Activated naive CD8-positive, alpha-beta T cell treated with anti-CD3 and anti-CD28 coated beads, Interleukin-2, amount 10 ng/mL, durations not matched to agents 7 days and 5 days (primary cell): ENCODE measurements at regions of chr9 and their contacts with region 1.

Region 1: GRCh38 chr9:137578518-137579258 is at the start of gene DPH7:
- DNase-seq: peak; percentile 99
- ATAC-seq: peak; percentile 99
- H3K4me3 Mint-ChIP-seq: peak within 1 kb of the TSS; percentile 85
- H3K27ac Mint-ChIP-seq: peak within 1 kb of the TSS; percentile 56
- H3K4me1 Mint-ChIP-seq: peaks cover 23% of the 10 kb centered on the region
- H3K27me3 Mint-ChIP-seq: no peaks in the 10 kb centered on the region
- total RNA-seq, gene DPH7: 49.1 to 49.2 TPM

Region 2: DNA sequence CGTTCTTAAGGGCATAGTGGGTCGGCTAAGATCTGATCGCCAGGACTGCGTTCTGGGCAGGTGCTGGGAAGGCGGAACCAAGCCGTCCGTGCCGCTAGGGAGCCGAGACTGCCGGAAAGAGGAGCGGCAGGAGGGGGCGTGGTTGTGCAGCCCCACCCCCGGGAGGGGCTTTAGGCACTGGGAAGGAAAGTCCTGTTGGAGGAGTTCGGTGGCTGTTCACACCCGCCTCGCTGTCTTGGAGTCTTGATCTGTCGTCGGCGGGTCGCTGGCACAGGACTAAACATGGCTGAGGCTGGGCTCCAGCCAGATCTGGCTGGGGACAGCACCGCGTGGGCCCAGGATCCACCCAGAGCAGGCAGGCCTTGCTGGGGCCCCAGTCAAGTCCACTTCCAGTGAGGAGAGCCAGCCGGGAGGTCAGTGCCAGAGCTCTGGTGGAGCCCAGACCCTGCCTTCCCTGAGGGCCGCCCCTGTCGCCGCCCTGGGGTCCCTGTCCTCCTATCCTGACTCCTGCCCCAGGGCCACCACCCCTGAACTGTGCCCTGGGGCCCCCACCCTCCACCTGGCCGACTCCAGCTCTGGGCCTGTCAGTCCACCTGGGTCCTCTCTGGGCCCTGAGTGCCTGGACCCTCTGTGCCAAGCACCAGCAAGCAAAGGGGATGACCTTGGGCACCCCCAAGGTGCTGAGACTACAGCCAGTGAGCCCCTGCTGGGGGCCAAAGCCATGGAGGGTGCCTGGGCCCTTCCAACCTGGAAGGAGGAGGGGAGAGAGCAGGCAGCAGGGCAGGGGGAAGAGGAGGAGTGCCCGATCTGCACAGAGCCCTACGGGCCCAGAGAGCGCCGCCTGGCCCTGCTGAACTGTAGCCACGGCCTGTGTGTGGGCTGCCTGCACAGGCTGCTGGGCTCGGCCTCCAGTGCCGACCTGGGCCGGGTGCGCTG is 361.1 kb before region 1 on chr9:
- POLR2A ChIA-PET with region 1: no interaction called
- DNase-seq: no peak
- ATAC-seq: no peak
- H3K4me3 Mint-ChIP-seq: no peak overlapping the region
- H3K27ac Mint-ChIP-seq: no peak overlapping the region
- H3K4me1 Mint-ChIP-seq: no peaks in the 10 kb centered on the region
- H3K27me3 Mint-ChIP-seq: no peaks in the 10 kb centered on the region

Region 3: DNA sequence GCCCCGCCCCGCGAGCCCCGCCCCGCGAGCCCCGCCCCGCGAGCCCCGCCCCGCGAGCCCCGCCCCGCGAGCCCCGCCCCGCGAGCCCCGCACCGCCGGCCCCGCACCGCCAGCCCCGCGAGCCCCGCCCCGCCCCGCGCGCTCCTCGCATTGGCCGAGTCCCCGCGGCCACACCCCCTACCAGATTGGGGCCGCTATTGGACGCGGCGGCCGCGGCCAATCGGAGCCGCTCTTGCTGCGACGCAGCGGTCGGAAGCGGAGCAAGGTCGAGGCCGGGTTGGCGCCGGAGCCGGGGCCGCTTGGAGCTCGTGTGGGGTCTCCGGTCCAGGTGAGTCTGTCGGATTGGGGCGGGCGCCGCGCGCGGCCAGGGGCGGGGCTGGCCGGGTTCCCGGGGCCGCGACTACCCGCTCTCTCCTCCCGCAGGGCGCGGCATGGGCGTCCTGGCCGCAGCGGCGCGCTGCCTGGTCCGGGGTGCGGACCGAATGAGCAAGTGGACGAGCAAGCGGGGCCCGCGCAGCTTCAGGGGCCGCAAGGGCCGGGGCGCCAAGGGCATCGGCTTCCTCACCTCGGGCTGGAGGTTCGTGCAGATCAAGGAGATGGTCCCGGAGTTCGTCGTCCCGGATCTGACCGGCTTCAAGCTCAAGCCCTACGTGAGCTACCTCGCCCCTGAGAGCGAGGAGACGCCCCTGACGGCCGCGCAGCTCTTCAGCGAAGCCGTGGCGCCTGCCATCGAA is 26.9 kb before region 1 on chr9 and contains the start of gene MRPL41:
- POLR2A ChIA-PET with region 1: interaction called, 11 read pairs
- DNase-seq: peak; percentile 96
- ATAC-seq: peak; percentile 91
- H3K4me3 Mint-ChIP-seq: peak within 1 kb of the TSS; percentile 77
- H3K27ac Mint-ChIP-seq: peak within 1 kb of the TSS; percentile 69
- H3K4me1 Mint-ChIP-seq: peaks cover 7% of the 10 kb centered on the region
- H3K27me3 Mint-ChIP-seq: no peaks in the 10 kb centered on the region
- total RNA-seq, gene MRPL41: 58.8 to 64.4 TPM

Region 4: DNA sequence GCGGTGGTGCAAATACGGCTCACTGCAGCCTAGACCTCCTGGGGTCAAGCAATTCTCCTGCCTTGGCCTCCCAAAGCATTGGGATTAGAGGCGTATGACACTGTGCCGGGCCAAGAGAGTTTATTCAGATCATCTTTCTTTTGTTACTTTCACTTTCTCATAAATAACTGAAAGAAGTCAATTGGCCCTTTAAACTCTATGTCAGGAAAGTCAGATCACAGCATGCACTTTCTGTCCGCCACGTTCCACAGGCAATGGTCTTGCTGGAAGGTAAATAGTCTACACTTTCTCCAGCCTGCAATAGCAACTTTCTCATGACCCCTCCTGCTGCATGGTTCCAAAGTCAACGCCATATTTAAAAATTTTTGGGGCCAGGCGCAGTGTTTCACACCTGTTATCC is 20.3 kb after region 1 on chr9:
- POLR2A ChIA-PET with region 1: no interaction called
- DNase-seq: no peak
- ATAC-seq: no peak
- H3K4me3 Mint-ChIP-seq: no peak overlapping the region
- H3K27ac Mint-ChIP-seq: no peak overlapping the region
- H3K4me1 Mint-ChIP-seq: peaks cover 14% of the 10 kb centered on the region
- H3K27me3 Mint-ChIP-seq: peaks cover 4% of the 10 kb centered on the region